Mammary epithelial cell (primary cell): ENCODE measurements at regions of chr5 and their contacts with region 1.

Region 1: DNA sequence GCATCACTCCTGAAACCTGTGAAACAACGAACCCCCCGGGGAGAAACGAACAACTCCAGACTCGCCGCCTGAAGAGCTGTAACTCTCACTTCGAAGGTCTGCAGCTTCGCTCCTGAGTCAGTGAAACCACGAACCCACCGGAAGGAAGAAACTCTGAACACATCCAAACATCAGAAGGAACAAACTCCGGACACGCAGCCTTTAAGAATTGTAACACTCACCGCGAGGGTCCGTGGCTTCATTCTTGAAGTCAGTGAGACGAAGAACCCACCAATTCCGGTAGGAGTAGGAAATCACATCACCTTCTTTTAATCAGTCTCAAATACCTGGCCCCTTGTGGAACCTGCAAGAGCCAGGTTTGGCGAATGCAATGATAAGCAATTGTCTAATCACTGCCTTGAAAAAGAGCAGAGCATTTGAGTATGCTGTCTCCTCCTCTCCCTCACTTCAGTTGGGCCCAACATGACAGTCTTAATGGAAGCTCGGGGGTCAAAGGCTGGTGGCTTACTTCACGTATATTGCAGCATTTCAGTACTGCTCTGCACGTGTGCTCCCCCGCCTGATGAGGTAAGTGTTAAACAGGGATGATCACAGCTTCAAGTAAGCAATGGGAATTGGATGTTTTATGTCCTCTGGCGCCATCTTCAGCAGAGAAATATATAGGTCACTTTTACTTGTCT is 473 bp downstream of the IRGM start:
- DNase-seq: peak; percentile 73
- H3K4me3 ChIP-seq: no peak overlapping the region
- H3K27ac ChIP-seq: no peak overlapping the region
- H3K4me1 ChIP-seq: no peaks in the 10 kb centered on the region
- H3K27me3 ChIP-seq: no peaks in the 10 kb centered on the region
- CTCF ChIP-seq: peak; percentile 56 to 66

Region 2: DNA sequence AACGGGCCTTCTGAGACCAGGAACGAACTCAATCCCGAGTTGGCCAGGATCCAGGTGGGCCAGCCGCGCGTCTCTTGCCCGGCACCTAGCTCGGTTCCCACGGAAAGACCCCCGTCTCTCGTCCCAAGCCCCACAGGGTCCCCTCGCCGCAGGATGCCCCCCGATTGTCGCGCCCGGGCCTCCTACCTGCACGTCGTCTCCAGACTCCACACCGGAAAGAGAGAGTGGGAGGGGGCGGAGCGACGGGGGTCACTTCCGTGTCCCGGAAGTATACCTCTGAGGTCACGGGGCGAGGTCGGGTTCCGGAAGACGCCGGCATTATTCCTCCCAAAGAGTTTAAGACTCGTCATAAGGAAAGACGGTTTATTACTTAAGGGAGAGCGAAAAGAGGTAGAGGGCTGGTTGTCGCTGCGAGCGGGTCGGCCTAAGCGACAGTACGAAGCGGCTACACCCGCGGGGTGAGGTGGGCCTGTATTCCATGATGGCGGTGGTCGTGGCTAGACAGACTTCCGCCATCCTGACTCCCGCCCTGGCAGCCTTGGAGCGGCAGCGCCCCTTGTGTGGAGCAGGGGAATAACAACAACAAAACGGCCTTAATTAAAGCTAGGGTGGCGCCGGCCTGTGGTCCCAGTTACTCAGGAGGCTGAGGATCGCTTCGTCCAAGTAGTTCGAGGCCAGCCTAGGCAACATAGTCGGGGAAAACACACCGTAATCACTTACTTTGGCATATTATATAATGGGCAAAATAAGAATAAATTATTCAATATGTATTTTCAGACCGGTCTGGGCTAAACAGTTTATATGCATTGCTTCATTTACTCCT is 397.1 kb before region 1 on chr5 and contains the start of gene RPS14:
- CTCF ChIA-PET with region 1: no interaction called
- dilution Hi-C with region 1: no loop called
- in situ Hi-C with region 1: loop called in 1 of 2 experiments (anchors 25 kb)
- intact Hi-C with region 1: no loop called
- DNase-seq: peak; percentile 94
- H3K4me3 ChIP-seq: peak within 1 kb of the TSS; percentile 79 to 86 (median 79)
- H3K27ac ChIP-seq: peak within 1 kb of the TSS; percentile 88
- H3K4me1 ChIP-seq: peaks cover 17% of the 10 kb centered on the region
- H3K27me3 ChIP-seq: no peaks in the 10 kb centered on the region
- CTCF ChIP-seq: peak; percentile 80 to 86
- total RNA-seq, gene RPS14: 1,819 to 2,158 TPM

Region 3: GRCh38 chr5:150656191-150657132 is 190.3 kb before region 1 on chr5:
- CTCF ChIA-PET with region 1: no interaction called
- dilution Hi-C with region 1: no loop called
- in situ Hi-C with region 1: no loop called
- intact Hi-C with region 1: loop called (anchors 2 kb)
- DNase-seq: no peak
- H3K4me3 ChIP-seq: peak overlapping the region; percentile 44 to 58 (median 54)
- H3K27ac ChIP-seq: no peak overlapping the region
- H3K4me1 ChIP-seq: no peaks in the 10 kb centered on the region
- H3K27me3 ChIP-seq: no peaks in the 10 kb centered on the region
- CTCF ChIP-seq: peak; percentile 38 to 62

Region 4: DNA sequence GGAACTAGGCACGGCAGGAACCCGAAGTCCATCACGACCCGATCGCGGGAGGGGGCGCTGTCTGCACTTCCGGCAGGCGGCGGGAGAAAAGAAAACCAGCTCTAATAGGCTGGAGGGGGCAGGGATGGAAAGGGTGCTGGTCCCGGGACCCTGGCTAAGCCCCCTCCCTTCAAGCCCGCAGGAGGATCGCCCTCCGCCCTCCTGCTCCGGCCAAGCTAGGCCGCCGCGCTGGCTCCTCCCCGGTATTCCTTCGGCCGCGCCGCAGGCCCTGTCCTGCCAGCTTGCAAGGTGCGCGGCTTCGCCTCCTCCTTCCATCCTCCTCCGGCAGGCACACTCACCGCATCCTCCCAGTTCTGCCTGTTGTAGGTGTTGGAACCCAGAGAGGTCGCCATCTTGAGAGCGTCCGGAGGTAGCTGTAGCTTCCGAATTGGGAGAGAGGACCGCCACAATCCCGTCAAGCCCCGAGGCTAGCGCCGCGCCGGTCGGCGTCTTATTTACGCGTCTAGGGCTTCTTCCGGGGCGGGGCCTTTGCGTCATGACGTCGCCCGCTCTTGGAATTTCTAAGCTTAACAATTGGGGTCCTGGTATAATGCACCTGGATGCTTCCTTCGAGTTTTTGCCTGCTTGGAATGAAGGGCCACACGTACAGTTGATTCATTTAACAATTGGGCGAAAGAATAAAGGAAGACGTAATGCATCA is 146.1 kb before region 1 on chr5 and contains the start of gene RBM22:
- CTCF ChIA-PET with region 1: no interaction called
- dilution Hi-C with region 1: no loop called
- in situ Hi-C with region 1: no loop called
- intact Hi-C with region 1: loop called (anchors 1 kb)
- DNase-seq: peak; percentile 83
- H3K4me3 ChIP-seq: peak within 1 kb of the TSS; percentile 73 to 97 (median 84)
- H3K27ac ChIP-seq: peak within 1 kb of the TSS; percentile 78
- H3K4me1 ChIP-seq: peaks cover 11% of the 10 kb centered on the region
- H3K27me3 ChIP-seq: no peaks in the 10 kb centered on the region
- CTCF ChIP-seq: peak; percentile 22 to 74
- total RNA-seq, gene RBM22: 28.5 to 34.7 TPM

Region 5: GRCh38 chr5:150758531-150759333 is 88.1 kb before region 1 on chr5 and contains the start of gene DCTN4:
- CTCF ChIA-PET with region 1: interaction called, 3 read pairs
- dilution Hi-C with region 1: no loop called
- in situ Hi-C with region 1: no loop called
- intact Hi-C with region 1: loop called (anchors 1 kb)
- DNase-seq: peak; percentile 100
- H3K4me3 ChIP-seq: peak within 1 kb of the TSS; percentile 73 to 75 (median 74)
- H3K27ac ChIP-seq: peak within 1 kb of the TSS; percentile 93
- H3K4me1 ChIP-seq: peaks cover 23% of the 10 kb centered on the region
- H3K27me3 ChIP-seq: no peaks in the 10 kb centered on the region
- CTCF ChIP-seq: no peak
- total RNA-seq, gene DCTN4: 64.7 to 70.9 TPM

Region 6: DNA sequence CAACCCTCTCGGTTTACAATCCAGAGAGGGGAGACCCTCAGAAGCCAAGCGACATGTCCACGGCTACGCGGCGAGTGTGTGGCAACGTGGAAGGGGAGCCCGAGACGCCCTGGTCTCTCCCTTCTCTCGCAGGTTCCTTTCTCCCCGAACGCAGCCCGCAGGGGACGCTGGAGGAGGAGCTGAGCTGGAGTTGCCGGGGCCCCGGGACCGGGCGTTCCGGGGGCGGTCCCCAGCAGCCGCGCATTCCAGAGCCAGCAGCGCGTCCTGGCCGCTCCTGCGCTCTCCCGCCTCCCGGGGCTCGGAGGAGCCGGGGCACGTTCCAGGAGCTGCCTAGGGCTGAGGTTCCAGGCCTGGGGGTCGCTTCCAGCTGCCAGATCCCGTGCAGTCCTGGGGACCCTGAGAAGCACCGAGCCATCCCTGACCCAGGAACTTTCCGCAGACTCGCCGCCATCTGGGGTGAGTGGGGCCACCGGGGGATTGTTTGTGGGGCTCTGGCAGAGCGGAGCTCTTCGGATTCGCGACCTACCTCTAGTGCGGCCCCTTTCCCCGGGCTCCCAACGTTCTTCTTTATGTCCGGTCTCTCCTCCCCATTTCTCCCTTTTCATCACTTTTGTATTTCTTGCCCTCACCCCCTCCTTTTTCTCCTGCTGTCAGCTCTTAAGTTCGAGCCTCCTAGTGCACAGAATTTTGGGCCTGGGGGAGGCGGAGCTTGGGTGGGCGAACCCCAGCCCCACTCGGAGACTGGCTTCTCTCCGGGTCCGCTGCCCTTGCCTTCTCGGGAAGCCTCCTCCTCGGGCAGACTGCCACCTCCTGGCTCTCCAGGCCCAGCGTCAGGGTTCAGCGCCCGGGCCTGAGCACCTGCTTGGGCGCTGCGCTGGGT is 68.0 kb before region 1 on chr5 and contains the start of gene SMIM3:
- CTCF ChIA-PET with region 1: no interaction called
- dilution Hi-C with region 1: no loop called
- in situ Hi-C with region 1: no loop called
- intact Hi-C with region 1: loop called (anchors 1 kb)
- DNase-seq: peak; percentile 72
- H3K4me3 ChIP-seq: peak within 1 kb of the TSS; percentile 66 to 88 (median 81)
- H3K27ac ChIP-seq: peak within 1 kb of the TSS; percentile 81
- H3K4me1 ChIP-seq: peaks cover 57% of the 10 kb centered on the region
- H3K27me3 ChIP-seq: no peaks in the 10 kb centered on the region
- CTCF ChIP-seq: peak in 1 of 2 donors; percentile 67
- total RNA-seq, gene SMIM3: 17.5 to 24.3 TPM

Region 7: GRCh38 chr5:150801117-150801927 is 45.5 kb before region 1 on chr5:
- CTCF ChIA-PET with region 1: no interaction called
- dilution Hi-C with region 1: no loop called
- in situ Hi-C with region 1: no loop called
- intact Hi-C with region 1: loop called (anchors 1 kb)
- DNase-seq: peak; percentile 74
- H3K4me3 ChIP-seq: peak overlapping the region; percentile 1 to 33 (median 23)
- H3K27ac ChIP-seq: peak overlapping the region; percentile 10
- H3K4me1 ChIP-seq: peaks cover 9% of the 10 kb centered on the region
- H3K27me3 ChIP-seq: no peaks in the 10 kb centered on the region
- CTCF ChIP-seq: peak; percentile 61 to 62

Region 8: DNA sequence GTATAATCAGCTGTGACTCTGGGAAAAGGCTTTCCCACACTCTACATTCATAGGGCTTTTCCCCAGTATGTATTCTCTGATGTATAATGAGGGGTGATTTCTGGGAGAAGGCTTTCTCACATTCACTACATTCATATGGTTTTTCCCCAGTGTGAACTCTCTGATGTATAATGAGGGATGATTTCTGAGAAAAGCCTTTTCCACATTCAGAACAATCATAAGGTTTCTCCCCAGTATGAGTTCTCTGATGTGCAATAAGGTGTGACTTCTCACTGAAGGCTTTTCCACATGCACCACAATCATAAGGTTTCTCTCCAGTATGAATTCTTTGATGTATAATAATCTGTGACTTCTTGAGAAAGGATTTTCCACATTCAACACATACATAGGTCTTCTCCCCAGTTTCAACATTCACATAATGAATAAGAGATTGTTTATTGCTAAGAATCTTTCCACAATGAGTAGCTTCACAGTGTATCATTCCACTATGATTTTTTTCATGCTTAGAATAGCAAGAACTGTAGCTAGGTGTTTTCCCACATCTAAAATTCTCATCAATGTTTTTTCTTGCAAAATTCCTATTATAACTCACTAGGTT is 84.7 kb after region 1 on chr5:
- CTCF ChIA-PET with region 1: no interaction called
- dilution Hi-C with region 1: no loop called
- in situ Hi-C with region 1: no loop called
- intact Hi-C with region 1: no loop called
- DNase-seq: no peak
- H3K4me3 ChIP-seq: no peak overlapping the region
- H3K27ac ChIP-seq: no peak overlapping the region
- H3K4me1 ChIP-seq: no peaks in the 10 kb centered on the region
- H3K27me3 ChIP-seq: no peaks in the 10 kb centered on the region
- CTCF ChIP-seq: no peak

Region 9: DNA sequence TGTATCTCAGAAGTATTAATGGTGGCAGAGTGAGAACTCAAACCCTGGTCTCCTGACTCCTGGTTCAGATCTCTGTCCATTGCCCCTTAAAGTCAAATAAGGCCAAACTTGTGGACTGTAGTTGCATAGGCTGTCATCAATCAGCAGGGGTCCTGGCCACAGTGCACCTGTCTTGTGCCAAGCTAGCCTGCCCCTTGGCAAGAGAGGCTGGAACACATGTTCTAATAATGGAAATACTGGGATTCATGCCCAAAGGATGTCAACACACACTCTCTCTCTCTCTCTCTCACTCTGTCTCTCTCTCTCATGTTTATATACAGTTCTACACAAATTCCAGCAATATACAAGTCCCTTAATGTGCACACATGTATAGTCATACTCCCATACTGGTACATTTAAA is 1033.5 kb after region 1 on chr5:
- CTCF ChIA-PET with region 1: no interaction called
- dilution Hi-C with region 1: no loop called
- in situ Hi-C with region 1: no loop called
- intact Hi-C with region 1: no loop called
- DNase-seq: no peak
- H3K4me3 ChIP-seq: no peak overlapping the region
- H3K27ac ChIP-seq: no peak overlapping the region
- H3K4me1 ChIP-seq: no peaks in the 10 kb centered on the region
- H3K27me3 ChIP-seq: no peaks in the 10 kb centered on the region
- CTCF ChIP-seq: no peak